ENCODE measurements at regions of chr19 and their contacts with region 1.

Region 1: GRCh38 chr19:4851551-4852290 is 15.7 kb downstream of the PLIN3 start:
- DNase-seq: peak; percentile 79 to 87
- ATAC-seq: peak; percentile 79 to 90 (median 86)
- H3K4me3 ChIP-seq: no peak overlapping the region
- H3K27ac ChIP-seq: no peak overlapping the region
- H3K4me1 ChIP-seq: no peaks in the 10 kb centered on the region
- H3K27me3 ChIP-seq: no peaks in the 10 kb centered on the region
- CTCF ChIP-seq: peak; percentile 85

Region 2: GRCh38 chr19:4589579-4590410 is 261.9 kb before region 1 on chr19:
- intact Hi-C with region 1: no loop called
- DNase-seq: no peak
- ATAC-seq: peak in 1 of 4 donors; percentile 35
- H3K4me3 ChIP-seq: no peak overlapping the region
- H3K27ac ChIP-seq: no peak overlapping the region
- H3K4me1 ChIP-seq: no peaks in the 10 kb centered on the region
- H3K27me3 ChIP-seq: peaks cover 0 to 35% (median 5%) of the 10 kb centered on the region in 3 donors
- CTCF ChIP-seq: peak; percentile 29

Region 3: DNA sequence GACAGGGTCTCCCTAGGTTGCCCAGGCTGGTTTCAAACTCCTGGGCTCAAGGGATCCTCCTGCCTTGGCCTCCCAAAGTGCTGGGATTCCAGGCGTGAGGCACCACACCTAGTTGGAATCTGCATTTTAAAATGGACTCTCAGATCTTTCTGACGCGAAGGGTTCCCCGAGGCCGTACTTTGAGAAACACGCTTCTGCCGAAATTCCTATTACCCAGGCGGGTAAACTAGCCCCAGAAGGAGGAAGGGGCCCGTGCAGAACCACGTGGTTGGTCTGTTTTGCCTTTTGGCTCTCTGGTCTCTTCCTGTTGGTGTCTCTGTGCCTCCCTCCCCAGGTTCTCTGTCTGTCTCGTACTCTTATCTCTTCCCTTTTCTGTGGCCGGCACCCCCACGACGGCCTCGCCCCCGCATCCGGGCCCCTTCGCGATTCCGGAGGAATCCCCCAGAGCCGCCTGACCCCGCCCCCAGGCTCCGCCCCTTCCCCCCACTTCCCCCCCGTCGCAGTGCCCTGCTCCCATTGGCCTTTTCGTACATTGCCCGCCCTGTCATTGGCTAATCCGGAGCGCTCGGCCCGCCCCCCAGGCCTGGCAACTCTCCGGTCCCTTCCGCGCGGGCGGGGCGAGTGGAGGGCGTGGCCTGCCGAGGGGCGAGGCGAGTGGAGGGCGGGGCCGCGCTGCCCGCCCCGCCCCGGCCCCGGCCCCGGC is 212.7 kb before region 1 on chr19 and contains the start of gene TNFAIP8L1:
- intact Hi-C with region 1: no loop called
- DNase-seq: peak; percentile 97 to 98
- ATAC-seq: peak; percentile 94 to 95 (median 94)
- H3K4me3 ChIP-seq: peak within 1 kb of the TSS; percentile 85
- H3K27ac ChIP-seq: peak within 1 kb of the TSS; percentile 78
- H3K4me1 ChIP-seq: peaks cover 10% of the 10 kb centered on the region
- H3K27me3 ChIP-seq: no peaks in the 10 kb centered on the region
- CTCF ChIP-seq: no peak
- total RNA-seq, gene TNFAIP8L1: 3.1 to 5.1 (median 3.8) TPM

Region 4: GRCh38 chr19:4791170-4792018 is 60.3 kb before region 1 on chr19 and contains the start of gene FEM1A:
- intact Hi-C with region 1: no loop called
- DNase-seq: peak; percentile 99
- ATAC-seq: peak; percentile 90 to 96 (median 94)
- H3K4me3 ChIP-seq: peak within 1 kb of the TSS; percentile 87
- H3K27ac ChIP-seq: peak within 1 kb of the TSS; percentile 93
- H3K4me1 ChIP-seq: peaks cover 32% of the 10 kb centered on the region
- H3K27me3 ChIP-seq: no peaks in the 10 kb centered on the region
- CTCF ChIP-seq: peak; percentile 98
- total RNA-seq, gene FEM1A: 135 to 210 (median 149) TPM

Region 5: GRCh38 chr19:4815426-4816201 is 36.1 kb before region 1 on chr19:
- intact Hi-C with region 1: loop called in 1 of 2 experiments (anchors 1 kb)
- DNase-seq: peak; percentile 87 to 92
- ATAC-seq: peak; percentile 82 to 88 (median 85)
- H3K4me3 ChIP-seq: peak overlapping the region; percentile 45
- H3K27ac ChIP-seq: peak overlapping the region; percentile 93
- H3K4me1 ChIP-seq: peaks cover 35% of the 10 kb centered on the region
- H3K27me3 ChIP-seq: no peaks in the 10 kb centered on the region
- CTCF ChIP-seq: no peak